ENCODE measurements at regions of chr2 and their contacts with region 1.

Region 1: GRCh38 chr2:13135856-13136255 is 419.1 kb downstream of the TRIB2 start:
- DNase-seq: no peak
- ATAC-seq: no peak
- H3K4me3 ChIP-seq: no peak overlapping the region
- H3K27ac ChIP-seq: no peak overlapping the region
- H3K4me1 ChIP-seq: no peaks in the 10 kb centered on the region
- H3K27me3 ChIP-seq: no peaks in the 10 kb centered on the region
- CTCF ChIP-seq: no peak
- POLR2A ChIP-seq: no peak

Region 2: DNA sequence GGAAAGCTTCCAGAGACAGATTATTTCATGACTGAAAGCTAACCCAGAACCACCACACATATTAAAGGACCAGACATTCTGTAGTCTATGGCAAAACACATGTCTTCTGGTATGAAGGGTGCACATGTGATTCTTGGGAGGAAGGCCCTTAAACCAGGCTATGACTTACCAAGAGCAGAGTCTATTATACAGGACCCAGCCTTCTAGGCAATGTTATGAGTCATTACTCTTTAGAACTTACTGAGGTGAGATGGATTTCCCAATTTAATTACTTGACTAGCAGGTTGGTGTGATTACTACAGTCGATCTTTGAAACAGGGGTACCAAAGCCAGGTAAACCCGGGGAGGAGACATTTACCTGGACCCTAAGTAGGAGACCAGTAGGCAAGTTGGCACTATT is 68.3 kb before region 1 on chr2:
- in situ Hi-C with region 1: loop called in 1 of 4 experiments (anchors 5 kb)
- intact Hi-C with region 1: no loop called
- DNase-seq: no peak
- ATAC-seq: no peak
- H3K4me3 ChIP-seq: no peak overlapping the region
- H3K27ac ChIP-seq: no peak overlapping the region
- H3K4me1 ChIP-seq: no peaks in the 10 kb centered on the region
- H3K27me3 ChIP-seq: no peaks in the 10 kb centered on the region
- CTCF ChIP-seq: no peak
- POLR2A ChIP-seq: no peak

Region 3: GRCh38 chr2:13089971-13090370 is 45.9 kb before region 1 on chr2:
- in situ Hi-C with region 1: no loop called
- intact Hi-C with region 1: no loop called
- DNase-seq: no peak
- ATAC-seq: no peak
- H3K4me3 ChIP-seq: no peak overlapping the region
- H3K27ac ChIP-seq: no peak overlapping the region
- H3K4me1 ChIP-seq: no peaks in the 10 kb centered on the region
- H3K27me3 ChIP-seq: no peaks in the 10 kb centered on the region
- CTCF ChIP-seq: no peak
- POLR2A ChIP-seq: no peak

Region 4: GRCh38 chr2:13227578-13227977 is 91.7 kb after region 1 on chr2:
- in situ Hi-C with region 1: no loop called
- intact Hi-C with region 1: no loop called
- DNase-seq: no peak
- ATAC-seq: no peak
- H3K4me3 ChIP-seq: no peak overlapping the region
- H3K27ac ChIP-seq: no peak overlapping the region
- H3K4me1 ChIP-seq: no peaks in the 10 kb centered on the region
- H3K27me3 ChIP-seq: no peaks in the 10 kb centered on the region
- CTCF ChIP-seq: no peak
- POLR2A ChIP-seq: no peak

Measured in gastrocnemius medialis (tissue), 4 donors.